K562 (cell line): ENCODE measurements at regions of chrX and their contacts with region 1.

Region 1: GRCh38 chrX:134520860-134521390 is 61.0 kb downstream of the HPRT1 start:
- DNase-seq: peak in 3 of 4 experiments; percentile 10 to 67 (median 39)
- ATAC-seq: peak; percentile 96
- H3K4me3 ChIP-seq: no peak overlapping the region
- H3K27ac ChIP-seq: no peak overlapping the region
- H3K4me1 ChIP-seq: no peaks in the 10 kb centered on the region
- H3K27me3 ChIP-seq: no peaks in the 10 kb centered on the region
- CTCF ChIP-seq: peak; percentile 68 to 72 (median 72)
- EP300 ChIP-seq: no peak
- POLR2A ChIP-seq: no peak
- RAD21 ChIP-seq: peak; percentile 85 to 90

Region 2: DNA sequence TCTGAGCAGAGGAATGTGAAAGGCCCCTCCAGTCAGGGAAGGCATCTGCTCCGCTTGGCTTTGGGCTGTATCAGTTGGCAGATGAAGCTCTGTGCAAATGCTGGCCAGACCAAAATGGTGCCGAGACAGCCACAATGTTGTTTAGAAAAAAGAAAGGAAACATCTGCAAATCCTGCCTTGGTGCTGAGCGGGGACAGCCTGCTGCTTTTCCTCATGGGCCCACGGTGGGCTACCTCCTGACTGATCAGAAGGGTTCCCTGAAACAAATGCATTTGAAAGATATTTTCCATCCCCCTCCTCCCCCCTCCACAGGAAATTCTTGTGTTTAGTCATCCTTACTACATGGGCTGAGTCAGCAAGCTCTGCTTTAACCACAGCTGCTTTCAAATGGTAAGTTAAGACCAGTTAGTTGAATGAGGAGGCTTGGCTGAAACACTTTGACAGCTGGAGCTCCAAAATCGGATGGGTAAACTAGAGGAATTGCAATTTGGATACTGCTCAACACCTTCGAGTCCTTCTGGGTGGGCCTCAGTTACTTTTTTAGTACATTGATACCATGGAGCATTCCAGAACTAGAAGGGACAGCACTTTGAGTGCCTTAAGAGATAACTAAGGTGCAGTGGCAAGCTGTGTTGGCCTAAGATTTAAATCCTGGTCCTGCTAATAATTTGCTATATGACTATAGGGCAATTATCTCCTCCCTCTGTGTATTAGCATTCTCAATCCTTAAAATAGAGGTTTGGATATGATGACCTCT is 101.3 kb after region 1 on chrX:
- CTCF ChIA-PET with region 1: no interaction called
- POLR2A ChIA-PET with region 1: no interaction called
- in situ Hi-C with region 1: no loop called
- intact Hi-C with region 1: loop called (anchors 5 kb)
- DNase-seq: peak; percentile 17 to 70 (median 39)
- ATAC-seq: peak; percentile 93
- H3K4me3 ChIP-seq: no peak overlapping the region
- H3K27ac ChIP-seq: peak overlapping the region; percentile 48; the same call in 2 of the 3 replicates
- H3K4me1 ChIP-seq: peaks cover 0 to 23% of the 10 kb centered on the region in 2 experiments; a peak in 4 of 5 replicates
- H3K27me3 ChIP-seq: no peaks in the 10 kb centered on the region
- CTCF ChIP-seq: no peak
- EP300 ChIP-seq: no peak; the same call in 1 of the 2 replicates
- POLR2A ChIP-seq: no peak
- RAD21 ChIP-seq: no peak